Activated CD4-positive, alpha-beta T cell treated with anti-CD3 and anti-CD28 coated beads, Interleukin-2, amount 10 ng/mL, durations not matched to agents 7 days and 5 days (primary cell): ENCODE measurements at regions of chr14 and their contacts with region 1.

Region 1: GRCh38 chr14:103910262-103910935 is 17.9 kb upstream of the TDRD9 start:
- DNase-seq: peak; percentile 80
- H3K4me3 Mint-ChIP-seq: peak overlapping the region; percentile 35
- H3K27ac Mint-ChIP-seq: peak overlapping the region; percentile 83
- H3K4me1 Mint-ChIP-seq: peaks cover 29% of the 10 kb centered on the region
- H3K27me3 Mint-ChIP-seq: no peaks in the 10 kb centered on the region

Region 2: GRCh38 chr14:103808403-103809001 is 101.9 kb before region 1 on chr14:
- CTCF ChIA-PET with region 1: interaction called, 12 read pairs
- POLR2A ChIA-PET with region 1: no interaction called
- DNase-seq: peak; percentile 75
- H3K4me3 Mint-ChIP-seq: no peak overlapping the region
- H3K27ac Mint-ChIP-seq: no peak overlapping the region
- H3K4me1 Mint-ChIP-seq: peaks cover 11% of the 10 kb centered on the region
- H3K27me3 Mint-ChIP-seq: no peaks in the 10 kb centered on the region

Region 3: DNA sequence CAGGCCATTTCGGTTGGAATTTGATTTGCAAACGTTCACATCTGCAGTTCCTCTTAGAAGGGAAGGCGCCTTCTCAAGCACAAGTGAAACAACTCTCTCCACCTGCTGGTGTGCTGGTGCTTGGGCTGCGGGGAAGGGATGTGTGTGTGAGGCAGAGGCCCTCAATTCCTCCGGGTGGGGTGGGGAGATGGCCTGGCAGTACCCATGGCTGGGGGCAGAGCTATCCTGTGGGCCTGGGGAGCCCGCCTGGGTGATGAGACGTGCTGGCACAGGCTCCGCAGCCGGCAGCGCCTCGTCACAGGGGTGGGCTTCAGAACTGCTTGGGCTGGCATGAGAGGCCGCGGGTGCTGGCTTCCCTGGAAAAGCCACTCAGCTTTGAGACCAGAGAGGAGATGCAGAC is 11.1 kb before region 1 on chr14:
- CTCF ChIA-PET with region 1: interaction called, 19 read pairs
- POLR2A ChIA-PET with region 1: no interaction called
- DNase-seq: no peak
- H3K4me3 Mint-ChIP-seq: no peak overlapping the region
- H3K27ac Mint-ChIP-seq: no peak overlapping the region
- H3K4me1 Mint-ChIP-seq: peaks cover 3% of the 10 kb centered on the region
- H3K27me3 Mint-ChIP-seq: no peaks in the 10 kb centered on the region

Region 4: DNA sequence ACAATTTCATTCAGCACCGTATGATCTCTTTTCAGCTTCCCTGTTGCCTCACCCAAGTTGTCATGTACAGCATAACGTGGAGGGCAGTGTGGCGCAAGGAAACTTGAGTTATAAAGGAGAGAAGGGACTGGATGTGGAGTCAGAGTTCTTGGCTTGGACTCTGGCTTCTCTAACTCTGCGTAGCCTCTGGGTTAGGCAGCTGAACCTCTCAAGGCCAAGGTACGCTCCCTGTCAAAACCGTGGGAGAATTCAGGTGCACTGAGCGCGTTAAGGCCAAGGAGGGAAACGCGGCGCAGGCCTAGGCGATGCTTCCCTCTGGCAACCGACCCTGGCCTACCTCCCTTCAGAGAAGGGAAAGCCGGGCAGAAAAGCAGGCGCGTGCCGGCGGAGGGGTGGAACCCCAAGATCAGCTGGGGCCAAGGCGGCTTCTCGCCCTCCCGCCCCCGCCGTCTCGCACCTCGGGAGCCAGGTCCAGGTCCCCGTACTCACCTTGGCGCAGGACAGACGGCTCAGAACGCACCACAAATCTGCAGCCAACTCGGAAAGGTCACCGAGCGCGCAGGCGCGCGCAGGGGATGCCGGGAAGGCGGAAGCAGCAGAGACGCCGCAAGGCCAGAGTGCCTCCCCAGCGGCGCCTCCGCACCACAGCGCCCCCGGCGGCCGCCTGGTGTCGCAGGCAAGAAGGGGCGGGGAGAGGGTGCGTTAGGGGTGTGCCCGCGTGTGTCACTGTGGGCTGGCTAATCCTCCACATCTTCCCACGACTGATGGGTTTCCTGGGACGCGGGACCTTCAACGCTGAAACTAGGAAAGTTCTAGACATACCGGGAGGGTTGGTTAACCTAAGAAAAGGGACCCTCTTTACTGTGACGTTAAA is 10.8 kb after region 1 on chr14:
- CTCF ChIA-PET with region 1: interaction called, 22 read pairs
- POLR2A ChIA-PET with region 1: no interaction called
- DNase-seq: peak; percentile 94
- H3K4me3 Mint-ChIP-seq: peak overlapping the region; percentile 92
- H3K27ac Mint-ChIP-seq: peak overlapping the region; percentile 86
- H3K4me1 Mint-ChIP-seq: peaks cover 10% of the 10 kb centered on the region
- H3K27me3 Mint-ChIP-seq: peaks cover 8% of the 10 kb centered on the region